Activated CD4-positive, alpha-beta T cell treated with anti-CD3 and anti-CD28 coated beads for 36 hours (primary cell): ENCODE measurements at regions of chr22 and their contacts with region 1.

Region 1: DNA sequence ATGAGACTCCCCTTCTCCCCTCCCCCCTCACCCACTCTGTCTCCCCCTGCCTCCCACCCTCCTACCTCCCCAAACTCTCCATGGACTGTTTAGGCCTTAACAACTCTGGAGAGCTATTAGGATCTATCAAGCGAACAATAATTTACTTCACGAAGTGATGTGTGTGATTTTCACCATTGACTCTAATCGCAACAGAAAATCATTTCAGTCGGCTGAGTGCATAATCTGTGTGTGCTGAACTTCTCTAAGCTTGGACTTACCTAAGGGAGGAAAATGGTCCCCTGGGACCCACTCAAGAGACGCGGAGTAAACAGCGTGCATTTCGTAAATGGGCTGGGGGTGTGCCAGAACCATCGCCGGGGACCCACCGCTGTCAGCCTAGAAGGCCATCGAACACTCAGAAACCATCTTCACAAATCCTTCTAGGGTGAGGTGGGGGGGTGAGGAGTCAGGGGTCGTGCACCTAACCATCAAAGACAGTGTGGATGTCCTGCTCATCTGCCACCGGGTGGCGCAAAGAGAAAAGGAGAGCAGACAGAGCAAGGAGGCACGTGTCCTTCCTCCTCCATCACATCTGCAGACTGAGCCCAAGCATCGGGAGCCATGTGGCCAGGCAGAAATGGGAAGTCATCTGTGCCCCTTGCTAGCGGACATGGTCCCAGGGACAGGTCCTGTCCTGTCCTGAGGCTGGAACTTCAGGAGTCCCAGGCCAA is 62.1 kb upstream of the NUP50 start:
- DNase-seq: peak; percentile 71
- ATAC-seq: peak; percentile 85
- H3K4me3 Mint-ChIP-seq: no peak overlapping the region
- H3K27ac Mint-ChIP-seq: no peak overlapping the region
- H3K4me1 Mint-ChIP-seq: peaks cover 5% of the 10 kb centered on the region
- H3K27me3 Mint-ChIP-seq: peaks cover 36% of the 10 kb centered on the region

Region 2: GRCh38 chr22:45208993-45209801 is 107.5 kb after region 1 on chr22:
- CTCF ChIA-PET with region 1: interaction called, 6 read pairs
- POLR2A ChIA-PET with region 1: no interaction called
- intact Hi-C with region 1: loop called in 1 of 2 experiments (anchors 2 kb)
- DNase-seq: peak; percentile 61
- ATAC-seq: peak; percentile 51
- H3K4me3 Mint-ChIP-seq: no peak overlapping the region
- H3K27ac Mint-ChIP-seq: no peak overlapping the region
- H3K4me1 Mint-ChIP-seq: peaks cover 6% of the 10 kb centered on the region
- H3K27me3 Mint-ChIP-seq: no peaks in the 10 kb centered on the region

Region 3: GRCh38 chr22:45435544-45436139 is 334.0 kb after region 1 on chr22:
- CTCF ChIA-PET with region 1: interaction called, 3 read pairs
- POLR2A ChIA-PET with region 1: no interaction called
- intact Hi-C with region 1: loop called (anchors 5 kb)
- DNase-seq: peak; percentile 88
- ATAC-seq: peak; percentile 91
- H3K4me3 Mint-ChIP-seq: no peak overlapping the region
- H3K27ac Mint-ChIP-seq: no peak overlapping the region
- H3K4me1 Mint-ChIP-seq: peaks cover 11% of the 10 kb centered on the region
- H3K27me3 Mint-ChIP-seq: no peaks in the 10 kb centered on the region